Heart right ventricle (tissue), 16 donors: ENCODE measurements at regions of chr17 and their contacts with region 1.

Region 1: GRCh38 chr17:40417609-40418427 is at the start of gene TOP2A:
- DNase-seq: peak; percentile 81 to 100
- ATAC-seq: peak; percentile 98 to 100 (median 100)
- H3K4me3 ChIP-seq: peak within 1 kb of the TSS; percentile 35 to 86 (median 60)
- H3K27ac ChIP-seq: peak within 1 kb of the TSS in 6 of 10 donors; percentile 29 to 76 (median 50)
- H3K4me1 ChIP-seq: peaks cover 8 to 48% (median 14%) of the 10 kb centered on the region in 9 donors
- H3K27me3 ChIP-seq: peaks cover 0 to 9% (median 0%) of the 10 kb centered on the region in 7 donors
- CTCF ChIP-seq: no peak
- total RNA-seq, gene TOP2A: 0.17 to 20.0 (median 1.0) TPM

Region 2: DNA sequence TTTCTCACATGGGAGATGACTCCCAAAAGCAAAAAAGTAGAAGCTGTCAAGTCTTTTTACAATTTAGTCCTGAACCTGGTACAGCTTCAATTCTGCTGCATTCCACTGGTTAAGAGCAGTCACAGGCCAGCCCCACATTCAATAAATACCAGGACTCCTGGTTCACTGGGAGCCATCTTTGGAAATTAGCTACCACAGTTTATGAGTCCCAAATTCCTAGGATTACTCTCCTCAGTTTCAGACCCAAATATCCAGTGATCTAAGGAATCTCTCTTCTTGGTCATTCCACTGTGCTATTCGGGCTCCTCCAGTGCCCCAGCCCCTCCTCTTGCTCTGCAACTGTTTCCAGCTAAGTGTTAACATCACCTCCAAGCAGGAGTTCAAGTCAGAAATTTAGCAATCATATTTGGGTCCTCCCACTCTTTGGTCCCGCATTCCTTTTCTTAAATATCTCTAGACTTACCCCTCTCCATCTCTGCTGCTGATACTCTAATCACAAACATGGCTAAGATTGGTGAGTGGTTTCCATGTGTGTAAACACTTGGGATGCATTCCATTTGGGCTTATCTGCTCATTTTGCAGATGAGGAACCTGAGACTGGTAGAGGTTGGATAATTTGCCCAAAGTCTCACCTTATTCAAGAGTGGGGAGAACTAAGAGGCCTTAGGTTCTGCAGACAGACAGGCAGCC is 208.3 kb before region 1 on chr17:
- intact Hi-C with region 1: loop called in 2 of 10 experiments (anchors 10 kb)
- DNase-seq: no peak
- ATAC-seq: no peak
- H3K4me3 ChIP-seq: no peak overlapping the region
- H3K27ac ChIP-seq: no peak overlapping the region
- H3K4me1 ChIP-seq: no peaks in the 10 kb centered on the region
- H3K27me3 ChIP-seq: no peaks in the 10 kb centered on the region
- CTCF ChIP-seq: no peak

Region 3: GRCh38 chr17:40309031-40309948 is 108.5 kb before region 1 on chr17 and contains the start of gene RARA:
- intact Hi-C with region 1: loop called in 7 of 10 experiments (anchors 5 to 10 kb)
- DNase-seq: peak in 1 of 2 donors; percentile 49
- ATAC-seq: peak in 7 of 8 donors; percentile 19 to 56 (median 34)
- H3K4me3 ChIP-seq: peak within 1 kb of the TSS in 9 of 10 donors; percentile 41 to 61 (median 54)
- H3K27ac ChIP-seq: peak within 1 kb of the TSS in 9 of 10 donors; percentile 35 to 98 (median 86)
- H3K4me1 ChIP-seq: peaks cover 46 to 93% (median 80%) of the 10 kb centered on the region in 9 donors
- H3K27me3 ChIP-seq: no peaks in the 10 kb centered on the region
- CTCF ChIP-seq: no peak
- total RNA-seq, gene RARA: 11.2 to 34.0 (median 18.3) TPM

Region 4: GRCh38 chr17:40433551-40434415 is 16.0 kb after region 1 on chr17:
- intact Hi-C with region 1: loop called in 1 of 10 experiments (anchors 2 kb)
- DNase-seq: no peak
- ATAC-seq: peak in 4 of 8 donors; percentile 39 to 45 (median 45)
- H3K4me3 ChIP-seq: no peak overlapping the region
- H3K27ac ChIP-seq: peak overlapping the region in 7 of 10 donors; percentile 2 to 65 (median 50)
- H3K4me1 ChIP-seq: peaks cover 5 to 33% (median 26%) of the 10 kb centered on the region in 9 donors
- H3K27me3 ChIP-seq: no peaks in the 10 kb centered on the region
- CTCF ChIP-seq: peak; percentile 8 to 59 (median 48)